Uterus (tissue), 4 donors: ENCODE measurements at regions of chr22 and their contacts with region 1.

Region 1: GRCh38 chr22:38872172-38872830 is at the start of gene CBX6:
- DNase-seq: peak; percentile 95 to 98
- H3K4me3 ChIP-seq: peak within 1 kb of the TSS; percentile 73 to 91
- H3K27ac ChIP-seq: peak within 1 kb of the TSS; percentile 94 to 99
- H3K4me1 ChIP-seq: peaks cover 5 to 6% of the 10 kb centered on the region in 2 donors
- H3K27me3 ChIP-seq: no peaks in the 10 kb centered on the region
- CTCF ChIP-seq: peak in 2 of 4 experiments; percentile 3 to 27
- POLR2A ChIP-seq: peak; percentile 35 to 77
- total RNA-seq, gene CBX6: 11.0 to 145 (median 56.4) TPM

Region 2: DNA sequence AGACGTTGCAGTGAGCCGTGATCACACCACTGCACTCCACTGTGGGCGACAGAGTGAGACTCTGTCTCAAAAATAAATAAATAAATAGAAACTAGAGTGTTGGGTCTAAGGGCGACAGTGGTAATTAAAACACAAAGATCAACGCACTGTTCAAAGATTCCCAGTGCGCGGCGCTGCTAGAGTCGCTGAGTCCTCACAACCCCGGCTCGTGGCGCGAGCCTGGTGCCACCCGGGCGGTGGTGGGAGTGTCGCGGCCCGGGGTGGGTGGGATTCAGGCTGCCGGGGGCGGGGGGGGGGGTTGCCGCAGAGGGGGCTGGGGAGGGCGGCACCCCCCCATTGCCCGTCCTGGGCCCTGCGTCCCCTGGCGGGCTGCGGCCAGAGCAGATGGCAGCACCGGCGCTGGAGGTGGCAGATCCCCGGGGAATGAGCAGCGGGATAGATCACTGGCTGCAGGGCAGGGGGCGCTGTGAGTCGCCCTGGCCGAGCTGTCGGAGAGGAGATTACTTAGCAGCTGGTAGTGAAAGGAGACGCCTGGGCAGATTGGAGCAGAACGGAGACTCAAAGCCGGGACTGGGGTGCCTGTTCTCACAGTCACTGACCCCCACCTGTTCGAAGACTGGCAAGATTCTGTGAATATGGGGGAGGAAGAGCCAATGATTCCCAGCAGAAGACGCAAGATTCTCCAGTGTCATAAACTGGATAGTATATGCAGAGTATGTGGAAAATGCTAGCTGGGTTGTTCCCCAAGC is 54.9 kb after region 1 on chr22:
- intact Hi-C with region 1: loop called (anchors 10 kb)
- DNase-seq: peak; percentile 60 to 65
- H3K4me3 ChIP-seq: peak overlapping the region in 1 of 2 donors; percentile 19
- H3K27ac ChIP-seq: peak overlapping the region in 1 of 2 donors; percentile 36
- H3K4me1 ChIP-seq: peaks cover 0 to 5% of the 10 kb centered on the region in 2 donors
- H3K27me3 ChIP-seq: no peaks in the 10 kb centered on the region
- CTCF ChIP-seq: peak in 3 of 4 experiments; percentile 51 to 68 (median 56)
- POLR2A ChIP-seq: no peak

Region 3: GRCh38 chr22:38973289-38974169 is 101.2 kb after region 1 on chr22:
- intact Hi-C with region 1: loop called (anchors 10 kb)
- DNase-seq: no peak
- H3K4me3 ChIP-seq: no peak overlapping the region
- H3K27ac ChIP-seq: no peak overlapping the region
- H3K4me1 ChIP-seq: no peaks in the 10 kb centered on the region
- H3K27me3 ChIP-seq: no peaks in the 10 kb centered on the region
- CTCF ChIP-seq: peak in 2 of 4 experiments; percentile 61
- POLR2A ChIP-seq: no peak

Region 4: DNA sequence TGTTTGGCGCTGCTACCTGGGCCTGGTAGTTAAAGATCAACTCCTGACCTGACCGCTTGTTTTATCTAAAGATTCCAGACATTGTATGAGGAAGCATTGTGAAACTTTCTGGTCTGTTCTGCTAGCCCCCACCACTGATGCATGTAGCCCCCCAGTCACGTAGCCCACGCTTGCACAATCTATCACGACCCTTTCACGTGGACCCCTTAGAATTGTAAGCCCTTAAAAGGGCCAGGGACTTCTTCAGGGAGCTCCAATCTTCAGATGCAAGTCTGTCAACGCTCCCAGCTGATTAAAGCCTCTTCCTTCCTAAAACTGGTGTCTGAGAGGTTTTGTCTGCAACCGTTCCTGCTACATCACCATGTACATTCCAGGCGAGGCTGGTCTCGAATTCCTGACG is 183.4 kb after region 1 on chr22:
- intact Hi-C with region 1: no loop called
- DNase-seq: no peak
- H3K4me3 ChIP-seq: no peak overlapping the region
- H3K27ac ChIP-seq: no peak overlapping the region
- H3K4me1 ChIP-seq: no peaks in the 10 kb centered on the region
- H3K27me3 ChIP-seq: no peaks in the 10 kb centered on the region
- CTCF ChIP-seq: no peak
- POLR2A ChIP-seq: no peak

Region 5: DNA sequence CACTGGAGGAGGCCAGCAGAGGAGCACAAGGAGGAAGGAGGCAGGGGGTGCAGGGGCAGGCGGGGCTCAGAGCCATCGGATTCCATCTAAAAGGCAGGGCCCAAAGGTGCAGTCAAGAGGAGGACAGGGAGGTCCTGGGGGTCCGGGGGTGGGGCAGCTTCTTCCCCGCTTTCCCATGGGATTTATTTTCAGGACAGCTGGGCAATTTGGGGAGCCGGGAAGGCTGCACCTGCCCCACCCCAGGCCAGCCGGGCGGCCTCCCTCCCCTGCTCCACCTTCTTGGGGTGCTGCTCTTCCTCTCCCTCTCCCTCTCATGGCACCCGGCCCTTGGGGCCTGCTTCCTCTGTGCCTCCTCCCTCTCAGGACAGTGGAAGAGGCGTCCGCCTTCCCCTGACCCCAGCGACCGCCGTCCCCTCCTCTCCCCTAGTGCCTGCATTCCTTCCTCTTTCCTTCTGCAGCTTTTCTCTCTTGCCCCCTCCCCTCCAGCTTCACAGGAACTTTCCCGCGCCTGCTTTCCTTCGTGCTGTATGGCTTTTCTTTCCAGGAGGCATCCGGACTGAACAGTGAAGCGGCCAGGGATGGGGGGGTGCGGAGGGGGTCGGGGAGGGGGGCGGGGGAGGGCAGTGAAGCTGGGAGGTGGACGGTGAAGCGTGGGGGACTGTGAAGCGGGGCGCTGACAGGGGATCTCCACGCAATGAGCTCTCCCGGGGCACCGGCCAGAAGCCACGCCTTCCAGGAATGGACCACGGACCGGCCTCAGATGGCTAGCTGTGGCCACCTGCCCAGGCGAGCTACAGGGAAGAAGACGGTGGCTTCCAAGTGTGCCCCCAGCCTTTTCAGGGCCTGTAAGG is 251.7 kb after region 1 on chr22:
- intact Hi-C with region 1: loop called (anchors 10 kb)
- DNase-seq: no peak
- H3K4me3 ChIP-seq: no peak overlapping the region
- H3K27ac ChIP-seq: no peak overlapping the region
- H3K4me1 ChIP-seq: no peaks in the 10 kb centered on the region
- H3K27me3 ChIP-seq: no peaks in the 10 kb centered on the region
- CTCF ChIP-seq: no peak
- POLR2A ChIP-seq: no peak